ENCODE measurements at regions of chr3 and their contacts with region 1.

Region 1: DNA sequence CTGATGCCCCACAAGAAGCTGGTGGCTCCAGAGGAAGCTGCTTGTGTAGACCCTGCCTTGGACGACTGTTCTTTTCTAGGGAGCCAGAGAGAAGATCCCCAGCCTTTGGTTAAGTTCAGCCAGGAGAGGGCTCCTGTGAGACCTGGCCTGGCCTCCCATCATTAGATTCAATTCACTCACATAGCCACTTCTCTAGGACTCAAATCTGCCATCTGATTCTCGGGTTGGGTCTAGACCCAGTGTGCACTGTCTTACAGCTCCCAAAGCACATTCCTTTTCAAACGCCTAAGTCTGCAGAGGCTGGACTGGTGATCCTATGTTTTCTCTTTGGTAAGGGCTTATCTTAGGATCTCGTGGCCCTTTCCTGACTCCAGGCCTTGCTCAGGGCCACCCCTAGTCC is 81.7 kb upstream of the NPHP3 start:
- DNase-seq: no peak
- ATAC-seq: no peak
- H3K4me3 ChIP-seq: no peak overlapping the region
- H3K27ac ChIP-seq: no peak overlapping the region
- H3K4me1 ChIP-seq: peaks cover 0 to 5% (median 0%) of the 10 kb centered on the region in 9 donors
- H3K27me3 ChIP-seq: no peaks in the 10 kb centered on the region
- CTCF ChIP-seq: no peak

Region 2: DNA sequence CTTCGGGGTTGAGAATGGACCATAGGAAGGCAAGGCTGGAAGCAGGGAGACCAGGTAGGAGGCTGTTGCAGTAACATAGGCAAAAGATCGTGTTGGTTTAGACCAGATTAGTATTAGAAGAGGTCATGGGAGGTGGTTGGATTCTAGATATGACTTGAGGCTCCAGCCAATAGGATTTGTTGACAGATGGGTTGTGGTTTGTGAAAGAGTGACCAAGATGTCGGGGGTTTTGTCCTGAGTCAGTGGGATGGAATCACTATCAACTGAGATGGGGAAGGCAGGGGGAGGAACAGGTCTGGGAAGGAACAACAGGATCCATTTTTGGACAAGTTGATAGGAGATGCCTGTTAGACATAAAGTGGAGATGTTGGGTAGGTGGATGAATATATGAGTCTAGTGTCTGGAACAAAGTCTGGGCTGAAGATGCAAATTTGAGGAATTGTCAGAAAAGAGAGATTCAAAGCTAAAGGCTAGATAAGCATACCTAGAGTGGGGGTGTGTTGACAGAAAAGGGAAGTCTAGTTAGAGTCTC is 13.8 kb after region 1 on chr3:
- intact Hi-C with region 1: loop called in 1 of 10 experiments (anchors 2 kb)
- DNase-seq: no peak
- ATAC-seq: no peak
- H3K4me3 ChIP-seq: no peak overlapping the region
- H3K27ac ChIP-seq: no peak overlapping the region
- H3K4me1 ChIP-seq: no peaks in the 10 kb centered on the region
- H3K27me3 ChIP-seq: no peaks in the 10 kb centered on the region
- CTCF ChIP-seq: no peak

Region 3: GRCh38 chr3:132867956-132868355 is 64.1 kb after region 1 on chr3:
- intact Hi-C with region 1: no loop called
- DNase-seq: no peak
- ATAC-seq: no peak
- H3K4me3 ChIP-seq: no peak overlapping the region
- H3K27ac ChIP-seq: peak overlapping the region in 1 of 10 donors; percentile 22
- H3K4me1 ChIP-seq: peaks cover 0 to 7% (median 0%) of the 10 kb centered on the region in 9 donors
- H3K27me3 ChIP-seq: peaks cover 0 to 10% (median 0%) of the 10 kb centered on the region in 7 donors
- CTCF ChIP-seq: no peak

Measured in heart right ventricle (tissue), 16 donors.